ENCODE measurements at regions of chr13 and their contacts with region 1.

Region 1: GRCh38 chr13:110220471-110220870 is 86.5 kb downstream of the COL4A1 start:
- DNase-seq: no peak
- H3K4me3 ChIP-seq: no peak overlapping the region
- H3K4me3 Mint-ChIP-seq: no peak overlapping the region
- H3K27ac ChIP-seq: no peak overlapping the region
- H3K27ac Mint-ChIP-seq: no peak overlapping the region
- H3K4me1 ChIP-seq: no peaks in the 10 kb centered on the region
- H3K4me1 Mint-ChIP-seq: no peaks in the 10 kb centered on the region
- H3K27me3 ChIP-seq: no peaks in the 10 kb centered on the region
- H3K27me3 Mint-ChIP-seq: peaks cover 5 to 9% of the 10 kb centered on the region in 2 donors

Region 2: GRCh38 chr13:110206185-110206584 is 14.3 kb before region 1 on chr13:
- CTCF ChIA-PET with region 1: interaction called, 10 read pairs
- POLR2A ChIA-PET with region 1: no interaction called
- intact Hi-C with region 1: no loop called
- DNase-seq: no peak
- H3K4me3 ChIP-seq: no peak overlapping the region
- H3K4me3 Mint-ChIP-seq: no peak overlapping the region
- H3K27ac ChIP-seq: no peak overlapping the region
- H3K27ac Mint-ChIP-seq: no peak overlapping the region
- H3K4me1 ChIP-seq: no peaks in the 10 kb centered on the region
- H3K4me1 Mint-ChIP-seq: no peaks in the 10 kb centered on the region
- H3K27me3 ChIP-seq: no peaks in the 10 kb centered on the region
- H3K27me3 Mint-ChIP-seq: peaks cover 0 to 2% of the 10 kb centered on the region in 2 donors

Region 3: GRCh38 chr13:110412132-110412914 is 191.9 kb after region 1 on chr13:
- CTCF ChIA-PET with region 1: interaction called, 34 read pairs
- POLR2A ChIA-PET with region 1: no interaction called
- intact Hi-C with region 1: no loop called
- DNase-seq: peak in 4 of 5 donors; percentile 38 to 43 (median 40)
- H3K4me3 ChIP-seq: no peak overlapping the region
- H3K4me3 Mint-ChIP-seq: no peak overlapping the region
- H3K27ac ChIP-seq: no peak overlapping the region
- H3K27ac Mint-ChIP-seq: no peak overlapping the region
- H3K4me1 ChIP-seq: peaks cover 3% of the 10 kb centered on the region
- H3K4me1 Mint-ChIP-seq: peaks cover 0 to 10% (median 3%) of the 10 kb centered on the region in 4 donors
- H3K27me3 ChIP-seq: peaks cover 5% of the 10 kb centered on the region
- H3K27me3 Mint-ChIP-seq: peaks cover 21 to 41% of the 10 kb centered on the region in 2 donors

Measured in CD4-positive, alpha-beta memory T cell (primary cell).